HEK293 (cell line): ENCODE measurements at regions of chr5 and their contacts with region 1.

Region 1: GRCh38 chr5:65481635-65482295 is at the start of gene ADAMTS6:
- H3K4me3 ChIP-seq: peak within 1 kb of the TSS; percentile 54
- H3K27ac ChIP-seq: peak within 1 kb of the TSS; percentile 85
- H3K4me1 ChIP-seq: peaks cover 22% of the 10 kb centered on the region
- CTCF ChIP-seq: no peak

Region 2: GRCh38 chr5:64811050-64811640 is 670.6 kb before region 1 on chr5:
- CTCF ChIA-PET with region 1: interaction called, 48 read pairs
- POLR2A ChIA-PET with region 1: interaction called, 3 read pairs
- H3K4me3 ChIP-seq: no peak overlapping the region
- H3K27ac ChIP-seq: no peak overlapping the region
- H3K4me1 ChIP-seq: no peaks in the 10 kb centered on the region
- CTCF ChIP-seq: 0 out of 2 replicates have a peak, but pooled peaks have one; percentile 26

Region 3: GRCh38 chr5:65102828-65103711 is 378.7 kb before region 1 on chr5:
- CTCF ChIA-PET with region 1: interaction called, 53 read pairs
- POLR2A ChIA-PET with region 1: interaction called, 6 read pairs
- H3K4me3 ChIP-seq: peak overlapping the region; percentile 43
- H3K27ac ChIP-seq: peak overlapping the region; percentile 74; the same call in 1 of the 2 replicates
- H3K4me1 ChIP-seq: peaks cover 4% of the 10 kb centered on the region
- CTCF ChIP-seq: peak; percentile 47; the same call in 1 of the 2 replicates

Region 4: DNA sequence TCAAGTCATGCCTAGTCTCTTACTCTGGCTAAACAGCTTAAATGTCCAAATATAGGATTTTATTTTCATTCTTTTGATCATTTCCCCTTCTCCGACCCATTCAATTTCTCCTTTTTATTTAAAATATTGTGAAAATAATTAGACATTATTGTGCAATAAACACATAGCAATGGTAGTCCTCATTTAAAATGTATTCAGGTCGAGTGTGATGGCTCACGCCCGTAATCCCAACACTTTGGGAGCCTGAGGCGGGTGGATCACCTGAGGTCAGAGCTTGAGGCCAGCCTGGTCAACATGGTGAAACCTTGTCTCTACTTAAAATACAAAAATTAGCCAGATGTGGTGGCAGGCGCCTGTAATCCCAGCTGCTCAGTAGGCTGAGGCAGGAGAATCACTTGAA is 26.7 kb before region 1 on chr5:
- CTCF ChIA-PET with region 1: no interaction called
- POLR2A ChIA-PET with region 1: no interaction called
- H3K4me3 ChIP-seq: no peak overlapping the region
- H3K27ac ChIP-seq: no peak overlapping the region
- H3K4me1 ChIP-seq: no peaks in the 10 kb centered on the region
- CTCF ChIP-seq: no peak

Region 5: DNA sequence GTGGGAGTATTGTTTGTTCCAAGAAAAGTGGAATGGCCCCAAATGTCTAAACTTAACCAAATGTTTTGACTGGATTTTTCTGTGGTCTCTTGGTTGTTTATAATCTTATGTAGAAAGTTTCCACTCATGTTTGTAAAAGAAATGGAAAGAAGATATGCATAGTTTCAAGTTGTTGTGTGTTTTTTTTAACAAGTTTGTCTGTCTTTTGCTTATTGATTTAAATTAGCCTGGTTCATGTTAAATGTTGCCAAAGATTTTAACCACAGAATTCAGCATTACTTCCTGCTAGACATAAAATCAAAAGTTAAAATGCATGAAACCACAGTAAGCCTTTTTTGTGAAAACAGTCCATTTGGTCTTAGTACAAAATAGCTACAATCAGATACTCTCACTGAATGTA is 95.4 kb after region 1 on chr5:
- CTCF ChIA-PET with region 1: no interaction called
- POLR2A ChIA-PET with region 1: no interaction called
- H3K4me3 ChIP-seq: no peak overlapping the region
- H3K27ac ChIP-seq: no peak overlapping the region
- H3K4me1 ChIP-seq: no peaks in the 10 kb centered on the region
- CTCF ChIP-seq: no peak